ENCODE measurements at regions of chr14 and their contacts with region 1.

Region 1: GRCh38 chr14:72523424-72524294 is 370.2 kb downstream of the DPF3 start:
- DNase-seq: no peak
- H3K4me3 Mint-ChIP-seq: no peak overlapping the region
- H3K27ac Mint-ChIP-seq: no peak overlapping the region
- H3K4me1 Mint-ChIP-seq: peaks cover 44% of the 10 kb centered on the region
- H3K27me3 Mint-ChIP-seq: no peaks in the 10 kb centered on the region

Region 2: GRCh38 chr14:72638021-72638420 is 114.4 kb after region 1 on chr14:
- CTCF ChIA-PET with region 1: no interaction called
- intact Hi-C with region 1: no loop called
- DNase-seq: no peak
- H3K4me3 Mint-ChIP-seq: no peak overlapping the region
- H3K27ac Mint-ChIP-seq: no peak overlapping the region
- H3K4me1 Mint-ChIP-seq: no peaks in the 10 kb centered on the region
- H3K27me3 Mint-ChIP-seq: no peaks in the 10 kb centered on the region

Region 3: DNA sequence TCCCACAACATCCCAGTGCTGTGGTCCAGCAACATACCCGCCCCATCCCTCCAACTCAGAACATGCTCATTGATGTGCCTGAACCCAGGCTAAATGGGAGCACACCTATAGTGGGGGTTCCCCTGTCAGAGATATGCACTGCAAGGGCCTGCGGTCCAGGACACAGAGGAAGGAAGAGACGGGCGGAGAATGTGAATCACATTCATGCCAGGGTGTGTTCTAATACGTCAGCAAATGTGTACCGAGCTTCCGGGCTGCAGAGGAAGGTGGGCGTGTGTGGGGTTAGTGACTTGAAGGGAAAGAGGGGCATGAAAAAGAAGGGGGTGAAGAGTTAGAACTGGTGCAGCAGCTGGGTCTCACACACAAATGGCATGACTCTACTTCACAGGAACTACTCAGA is 286.5 kb after region 1 on chr14:
- CTCF ChIA-PET with region 1: no interaction called
- intact Hi-C with region 1: loop called (anchors 1 kb)
- DNase-seq: peak; percentile 86
- H3K4me3 Mint-ChIP-seq: no peak overlapping the region
- H3K27ac Mint-ChIP-seq: peak overlapping the region; percentile 91
- H3K4me1 Mint-ChIP-seq: peaks cover 23% of the 10 kb centered on the region
- H3K27me3 Mint-ChIP-seq: no peaks in the 10 kb centered on the region

Measured in activated naive CD4-positive, alpha-beta T cell treated with anti-CD3 and anti-CD28 coated beads for 36 hours (primary cell).